ENCODE measurements at regions of chr5 and their contacts with region 1.

Region 1: GRCh38 chr5:151740336-151740942 is 18.0 kb downstream of the ATOX1 start:
- DNase-seq: peak; percentile 48 to 84
- H3K4me3 ChIP-seq: peak overlapping the region in 1 of 2 donors; percentile 7
- H3K27ac ChIP-seq: peak overlapping the region; percentile 74 to 80
- H3K4me1 ChIP-seq: peaks cover 0 to 46% (median 25%) of the 10 kb centered on the region in 4 donors
- H3K27me3 ChIP-seq: no peaks in the 10 kb centered on the region
- CTCF ChIP-seq: peak; percentile 86 to 96

Region 2: GRCh38 chr5:151659001-151659754 is 81.3 kb before region 1 on chr5:
- intact Hi-C with region 1: loop called (anchors 1 kb)
- DNase-seq: peak; percentile 61 to 91
- H3K4me3 ChIP-seq: no peak overlapping the region
- H3K27ac ChIP-seq: peak overlapping the region; percentile 34 to 89
- H3K4me1 ChIP-seq: peaks cover 0 to 35% (median 20%) of the 10 kb centered on the region in 4 donors
- H3K27me3 ChIP-seq: no peaks in the 10 kb centered on the region
- CTCF ChIP-seq: peak; percentile 80 to 94

Region 3: GRCh38 chr5:152061095-152061494 is 320.7 kb after region 1 on chr5:
- intact Hi-C with region 1: no loop called
- DNase-seq: no peak
- H3K4me3 ChIP-seq: no peak overlapping the region
- H3K27ac ChIP-seq: no peak overlapping the region
- H3K4me1 ChIP-seq: no peaks in the 10 kb centered on the region
- H3K27me3 ChIP-seq: no peaks in the 10 kb centered on the region
- CTCF ChIP-seq: no peak

Measured in tibial artery (tissue), 4 donors.